ENCODE measurements at regions of chr6 and their contacts with region 1.

Region 1: GRCh38 chr6:37638414-37639341 is 59.0 kb downstream of the MDGA1 start:
- DNase-seq: peak; percentile 69 to 82
- H3K4me3 ChIP-seq: no peak overlapping the region
- H3K27ac ChIP-seq: peak overlapping the region; percentile 85
- H3K4me1 ChIP-seq: peaks cover 37% of the 10 kb centered on the region
- H3K27me3 ChIP-seq: no peaks in the 10 kb centered on the region
- CTCF ChIP-seq: no peak

Region 2: DNA sequence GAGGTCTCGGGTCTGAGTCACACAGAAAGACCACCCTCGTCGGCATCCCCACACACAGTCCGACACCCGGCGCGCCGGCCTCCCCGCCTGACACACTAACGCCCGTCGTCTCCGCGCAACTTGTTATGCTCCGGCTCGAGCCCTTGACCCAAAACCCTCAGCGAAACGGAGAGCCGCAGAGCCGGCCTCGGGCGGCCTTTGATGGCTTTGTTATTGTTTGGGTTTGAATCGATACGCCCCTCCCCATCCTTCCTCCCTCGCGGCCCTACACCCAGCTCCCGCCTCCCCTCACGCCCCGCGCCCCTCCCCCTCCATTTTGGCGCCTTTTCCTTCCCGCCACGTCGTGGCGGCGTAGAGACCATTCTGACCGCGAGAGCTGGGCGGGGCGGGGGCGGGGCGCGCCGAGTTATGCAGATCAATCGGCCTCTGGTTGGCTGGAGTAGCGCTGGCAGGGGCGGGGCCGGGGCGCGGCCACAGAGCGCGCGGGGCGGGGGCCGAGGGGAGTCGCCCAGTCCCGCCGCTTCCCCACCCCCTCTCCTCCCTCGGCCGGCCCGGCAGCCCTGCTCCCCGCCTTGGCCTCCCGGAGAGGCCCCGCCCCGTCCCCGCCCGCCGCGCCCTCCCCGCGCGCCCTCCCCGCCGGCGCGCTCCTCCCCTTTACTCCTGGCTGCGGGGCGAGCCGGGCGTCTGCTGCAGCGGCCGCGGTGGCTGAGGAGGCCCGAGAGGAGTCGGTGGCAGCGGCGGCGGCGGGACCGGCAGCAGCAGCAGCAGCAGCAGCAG is 469.0 kb before region 1 on chr6 and contains the start of gene PIM1:
- CTCF ChIA-PET with region 1: no interaction called
- POLR2A ChIA-PET with region 1: no interaction called
- intact Hi-C with region 1: no loop called
- DNase-seq: peak; percentile 90 to 95
- H3K4me3 ChIP-seq: peak within 1 kb of the TSS; percentile 64
- H3K27ac ChIP-seq: peak within 1 kb of the TSS; percentile 97
- H3K4me1 ChIP-seq: peaks cover 42% of the 10 kb centered on the region
- H3K27me3 ChIP-seq: no peaks in the 10 kb centered on the region
- CTCF ChIP-seq: no peak
- total RNA-seq, gene PIM1: 51.0 and 60.3 TPM in 2 replicates

Region 3: DNA sequence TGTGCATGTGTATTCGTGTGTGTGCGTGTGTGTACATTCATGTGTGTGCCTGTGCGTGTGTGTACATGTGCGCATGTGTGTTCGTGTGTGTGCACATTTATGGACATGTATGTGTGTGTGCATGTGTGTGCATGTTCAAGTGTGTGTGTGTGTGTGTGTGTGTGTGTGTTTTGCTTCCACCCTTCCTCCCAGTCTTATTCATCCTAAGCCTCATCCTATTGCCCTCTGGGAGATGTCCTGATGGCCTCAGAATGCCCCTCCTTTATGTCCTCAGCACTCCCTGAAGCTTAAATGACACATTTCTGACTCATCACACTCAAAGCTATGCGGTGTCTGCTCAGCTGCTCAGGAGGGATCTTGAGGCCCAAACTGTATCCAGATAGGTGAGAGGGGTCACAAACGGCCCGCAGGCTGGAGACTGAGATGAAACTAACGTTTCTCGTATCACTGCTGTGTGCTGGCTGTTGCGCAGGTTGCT is 62.3 kb before region 1 on chr6:
- CTCF ChIA-PET with region 1: no interaction called
- POLR2A ChIA-PET with region 1: no interaction called
- intact Hi-C with region 1: loop called (anchors 2 kb)
- DNase-seq: peak; percentile 56 to 88
- H3K4me3 ChIP-seq: no peak overlapping the region
- H3K27ac ChIP-seq: peak overlapping the region; percentile 64
- H3K4me1 ChIP-seq: peaks cover 40% of the 10 kb centered on the region
- H3K27me3 ChIP-seq: no peaks in the 10 kb centered on the region
- CTCF ChIP-seq: no peak

Region 4: DNA sequence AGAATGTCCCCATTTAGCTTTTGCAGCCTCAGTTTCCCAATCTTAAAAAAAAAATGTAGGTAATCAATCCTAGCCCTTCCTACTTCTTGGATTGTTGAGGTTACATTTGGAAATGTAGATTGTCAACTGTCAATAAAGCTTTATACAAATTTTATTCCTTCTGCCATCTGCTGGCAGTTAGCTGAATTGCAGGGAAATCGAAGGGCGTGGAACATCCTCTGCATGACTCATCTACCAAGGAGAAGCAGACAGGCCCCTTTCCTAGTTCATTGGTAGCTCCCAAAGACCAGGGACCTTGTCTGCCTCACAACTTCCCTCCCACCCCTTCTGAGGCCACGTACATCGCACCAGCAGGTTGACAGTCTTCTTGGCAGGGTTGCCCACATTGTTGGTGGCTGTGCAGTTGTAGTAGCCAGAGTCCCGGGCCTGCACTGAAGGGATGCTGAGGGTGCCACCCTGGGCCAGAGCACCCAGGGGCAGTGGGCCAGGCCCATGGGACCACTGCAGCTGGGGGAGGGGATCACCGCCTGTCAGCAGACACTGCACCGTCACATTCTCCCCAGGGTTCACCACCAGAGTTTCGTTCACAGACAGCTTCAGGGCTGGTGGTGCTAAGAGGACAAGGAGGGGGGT is 15.4 kb after region 1 on chr6:
- CTCF ChIA-PET with region 1: no interaction called
- POLR2A ChIA-PET with region 1: interaction called, 10 read pairs
- intact Hi-C with region 1: no loop called
- DNase-seq: no peak
- H3K4me3 ChIP-seq: no peak overlapping the region
- H3K27ac ChIP-seq: no peak overlapping the region
- H3K4me1 ChIP-seq: peaks cover 16% of the 10 kb centered on the region
- H3K27me3 ChIP-seq: no peaks in the 10 kb centered on the region
- CTCF ChIP-seq: peak; percentile 94

Region 5: DNA sequence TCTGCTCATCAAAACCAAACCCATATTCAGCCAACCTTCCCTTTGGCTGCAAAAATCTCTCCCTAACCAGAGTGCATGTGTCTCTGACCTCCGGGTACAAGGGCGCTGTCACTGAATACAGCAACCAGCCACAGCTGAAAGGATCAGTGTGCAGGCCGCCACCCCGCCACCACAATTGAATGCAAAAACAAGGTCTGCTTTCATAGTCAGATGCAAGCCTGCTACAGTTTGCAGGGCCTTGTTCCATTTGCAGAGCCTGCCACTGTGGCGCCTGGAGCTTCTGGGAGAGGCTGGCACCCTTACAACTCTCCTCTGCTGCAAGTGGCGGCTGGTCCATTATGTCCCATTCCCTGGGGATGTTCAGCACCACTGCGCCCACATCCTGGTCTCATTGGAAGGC is 35.5 kb after region 1 on chr6:
- CTCF ChIA-PET with region 1: no interaction called
- POLR2A ChIA-PET with region 1: no interaction called
- intact Hi-C with region 1: loop called (anchors 1 kb)
- DNase-seq: no peak
- H3K4me3 ChIP-seq: no peak overlapping the region
- H3K27ac ChIP-seq: no peak overlapping the region
- H3K4me1 ChIP-seq: peaks cover 7% of the 10 kb centered on the region
- H3K27me3 ChIP-seq: no peaks in the 10 kb centered on the region
- CTCF ChIP-seq: no peak